ENCODE measurements at regions of chr10 and their contacts with region 1.

Region 1: DNA sequence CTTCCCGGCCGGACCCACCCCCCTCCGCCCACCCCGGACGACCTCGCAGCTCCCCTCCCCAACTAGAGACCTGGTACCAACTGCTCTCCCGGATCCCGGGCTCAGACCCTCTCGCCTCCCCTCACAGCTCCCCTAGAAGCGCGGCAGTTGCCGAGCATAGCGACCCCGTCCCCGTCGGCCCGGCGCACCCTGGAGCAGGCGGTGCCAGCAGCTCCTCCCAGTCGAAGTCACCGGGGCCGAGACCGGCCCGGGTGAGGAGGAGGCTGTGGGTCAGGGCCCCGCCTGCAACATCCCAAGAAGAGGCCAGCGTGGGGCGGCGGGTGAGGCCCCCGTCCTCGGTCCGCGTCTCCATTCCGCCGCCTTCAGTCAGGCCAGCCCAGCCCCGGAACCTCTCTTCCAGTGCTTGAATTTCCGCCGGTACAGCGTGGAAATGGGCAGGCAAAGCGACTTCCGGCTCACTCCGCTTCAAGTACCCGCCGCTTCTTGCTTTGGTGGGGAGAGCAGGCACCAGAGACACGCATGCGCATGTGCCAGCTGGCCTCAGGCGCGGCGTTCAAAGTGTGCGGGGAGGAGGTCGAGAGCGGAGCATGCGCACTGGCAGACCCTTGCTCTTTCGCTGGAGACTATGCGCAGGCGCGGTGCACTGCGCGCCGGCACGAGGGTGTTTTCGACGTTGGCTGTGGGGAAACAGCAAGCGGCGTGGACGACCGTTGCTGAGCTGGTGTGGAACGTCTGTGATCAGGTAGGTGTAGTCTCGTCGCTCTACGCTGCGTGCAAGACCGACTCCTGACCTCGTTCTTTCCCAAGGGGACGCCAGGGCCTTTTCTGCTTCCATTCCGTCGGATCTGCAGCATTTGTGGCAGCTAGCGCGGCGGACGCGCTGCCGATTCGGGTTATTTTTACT is at the start of gene C10orf88:
- DNase-seq: peak; percentile 98
- H3K4me3 ChIP-seq: peak within 1 kb of the TSS; percentile 79 to 97 (median 91)
- H3K27ac ChIP-seq: peak within 1 kb of the TSS; percentile 80 to 82 (median 82)
- H3K4me1 ChIP-seq: peaks cover 16 to 40% (median 20%) of the 10 kb centered on the region in 4 donors
- H3K27me3 ChIP-seq: no peaks in the 10 kb centered on the region
- CTCF ChIP-seq: peak in 1 of 3 experiments; percentile 35
- EP300 ChIP-seq: no peak
- POLR2A ChIP-seq: no peak
- total RNA-seq, gene C10orf88: 5.5 to 7.3 (median 5.9) TPM

Region 2: GRCh38 chr10:123008439-123009205 is 54.5 kb after region 1 on chr10 and contains the starts of genes ACADSB and IKZF5:
- intact Hi-C with region 1: loop called (anchors 2 kb)
- DNase-seq: peak; percentile 99
- H3K4me3 ChIP-seq: peak within 1 kb of the TSS; percentile 91 to 99 (median 98)
- H3K27ac ChIP-seq: peak within 1 kb of the TSS; percentile 90 to 95 (median 94)
- H3K4me1 ChIP-seq: peaks cover 41 to 57% (median 56%) of the 10 kb centered on the region in 4 donors
- H3K27me3 ChIP-seq: no peaks in the 10 kb centered on the region
- CTCF ChIP-seq: peak in 1 of 3 experiments; percentile 11
- EP300 ChIP-seq: no peak
- POLR2A ChIP-seq: peak; percentile 27
- total RNA-seq, gene ACADSB: 12.9 to 19.1 (median 14.0) TPM
- total RNA-seq, gene IKZF5: 5.7 to 12.0 (median 7.2) TPM

Region 3: GRCh38 chr10:123061865-123062264 is 107.8 kb after region 1 on chr10:
- intact Hi-C with region 1: no loop called
- DNase-seq: no peak
- H3K4me3 ChIP-seq: no peak overlapping the region
- H3K27ac ChIP-seq: no peak overlapping the region
- H3K4me1 ChIP-seq: no peaks in the 10 kb centered on the region
- H3K27me3 ChIP-seq: peaks cover 0 to 4% (median 0%) of the 10 kb centered on the region in 4 donors
- CTCF ChIP-seq: no peak
- EP300 ChIP-seq: no peak
- POLR2A ChIP-seq: no peak

Region 4: GRCh38 chr10:123154092-123154921 is 200.2 kb after region 1 on chr10 and contains the start of gene BUB3:
- intact Hi-C with region 1: loop called (anchors 10 kb)
- DNase-seq: peak; percentile 100
- H3K4me3 ChIP-seq: peak within 1 kb of the TSS; percentile 70 to 97 (median 92)
- H3K27ac ChIP-seq: peak within 1 kb of the TSS; percentile 80 to 95 (median 91)
- H3K4me1 ChIP-seq: peaks cover 32 to 56% (median 47%) of the 10 kb centered on the region in 4 donors
- H3K27me3 ChIP-seq: peaks cover 6 to 43% (median 32%) of the 10 kb centered on the region in 4 donors
- CTCF ChIP-seq: peak in 2 of 3 experiments; percentile 24 to 34
- EP300 ChIP-seq: no peak
- POLR2A ChIP-seq: peak; percentile 12
- total RNA-seq, gene BUB3: 67.9 to 90.1 (median 78.8) TPM

Region 5: DNA sequence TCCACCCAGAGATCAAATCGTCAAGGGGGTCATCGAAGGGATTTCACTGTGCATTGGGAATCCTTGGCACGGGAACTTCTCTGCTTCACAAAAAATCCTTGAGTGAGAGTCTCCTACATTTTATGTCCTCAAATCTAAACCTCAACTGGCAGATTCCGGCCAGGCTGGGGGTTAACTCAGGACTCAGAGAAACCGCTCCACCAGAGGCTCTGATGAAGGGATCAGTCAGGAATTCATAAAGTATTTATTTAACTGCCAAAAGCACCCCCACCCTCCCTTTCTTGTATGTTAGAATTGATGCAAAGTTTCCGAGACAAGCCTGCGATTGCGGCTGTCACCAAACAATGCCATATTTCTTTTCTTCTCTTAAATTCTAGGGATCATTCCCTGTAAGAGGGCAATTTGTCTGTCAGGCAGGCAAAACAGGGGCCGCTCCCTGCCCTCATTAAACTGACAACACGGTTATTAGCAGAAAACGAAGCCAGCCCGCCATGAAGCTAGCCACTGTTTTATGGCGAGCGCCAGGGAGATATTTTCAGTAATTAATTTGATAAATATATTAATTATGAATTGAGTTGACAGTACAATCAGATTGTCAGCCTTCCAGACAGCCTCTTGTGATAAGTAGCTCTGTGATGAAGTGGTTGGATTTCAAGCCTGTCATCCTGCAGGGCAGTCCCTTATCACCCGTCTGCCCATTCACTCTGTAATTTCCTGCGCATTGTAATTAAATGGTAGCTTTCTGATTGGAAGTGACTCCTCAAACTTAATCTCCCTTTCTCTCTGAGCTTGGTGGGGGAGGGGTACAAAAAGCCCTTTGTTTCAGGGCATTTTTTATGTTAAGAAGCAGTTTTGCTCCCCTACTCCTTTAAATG is 559.1 kb after region 1 on chr10:
- intact Hi-C with region 1: no loop called
- DNase-seq: no peak
- H3K4me3 ChIP-seq: no peak overlapping the region
- H3K27ac ChIP-seq: no peak overlapping the region
- H3K4me1 ChIP-seq: no peaks in the 10 kb centered on the region
- H3K27me3 ChIP-seq: peaks cover 0 to 9% (median 0%) of the 10 kb centered on the region in 4 donors
- CTCF ChIP-seq: no peak
- EP300 ChIP-seq: no peak
- POLR2A ChIP-seq: no peak

Measured in esophagus muscularis mucosa (tissue), 4 donors.